ENCODE measurements at regions of chr2 and their contacts with region 1.

Region 1: DNA sequence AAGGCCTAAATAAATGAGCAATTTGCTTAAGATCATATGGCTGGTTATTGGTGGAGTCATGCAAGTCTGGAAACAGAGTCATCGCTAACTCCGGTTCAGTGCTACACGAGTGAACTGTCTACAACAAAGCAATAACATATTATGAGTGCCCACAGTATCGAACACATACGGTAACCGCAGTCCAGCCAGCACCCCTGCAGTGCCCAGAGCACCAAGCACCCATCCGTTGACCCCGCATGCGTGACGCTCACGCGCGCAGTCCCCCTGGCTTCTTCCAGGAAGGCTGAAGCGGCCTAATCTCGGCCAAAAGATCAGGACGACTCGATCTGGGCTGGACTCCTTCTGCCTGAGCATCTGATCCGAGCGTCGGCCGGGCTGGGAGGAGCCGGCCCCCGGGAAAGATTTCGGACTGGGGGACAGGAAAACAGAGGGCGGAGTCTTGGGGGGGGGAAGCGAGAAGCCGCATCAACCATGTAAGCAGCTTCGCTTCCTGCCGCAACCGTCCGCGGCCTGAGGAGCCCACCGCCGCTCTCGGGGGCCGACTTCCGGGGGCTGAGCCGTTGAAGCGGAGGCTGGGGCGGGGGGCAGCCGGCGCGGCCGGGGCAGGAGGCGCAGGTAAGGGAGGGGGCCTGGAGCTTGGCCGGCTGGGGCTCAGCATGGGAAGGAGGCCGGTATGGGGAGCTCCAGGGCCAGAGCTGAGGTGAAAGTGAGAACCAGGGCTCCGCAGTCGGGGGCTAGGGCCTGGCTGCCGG is at the start of gene PIKFYVE:
- DNase-seq: peak; percentile 96
- ATAC-seq: peak; percentile 98
- total RNA-seq, gene PIKFYVE: 14.8 TPM

Region 2: GRCh38 chr2:208254871-208255556 is 11.0 kb before region 1 on chr2 and contains the start of gene IDH1:
- intact Hi-C with region 1: loop called (anchors 1 kb)
- DNase-seq: peak; percentile 98
- ATAC-seq: peak; percentile 97
- total RNA-seq, gene IDH1: 52.4 TPM

Region 3: DNA sequence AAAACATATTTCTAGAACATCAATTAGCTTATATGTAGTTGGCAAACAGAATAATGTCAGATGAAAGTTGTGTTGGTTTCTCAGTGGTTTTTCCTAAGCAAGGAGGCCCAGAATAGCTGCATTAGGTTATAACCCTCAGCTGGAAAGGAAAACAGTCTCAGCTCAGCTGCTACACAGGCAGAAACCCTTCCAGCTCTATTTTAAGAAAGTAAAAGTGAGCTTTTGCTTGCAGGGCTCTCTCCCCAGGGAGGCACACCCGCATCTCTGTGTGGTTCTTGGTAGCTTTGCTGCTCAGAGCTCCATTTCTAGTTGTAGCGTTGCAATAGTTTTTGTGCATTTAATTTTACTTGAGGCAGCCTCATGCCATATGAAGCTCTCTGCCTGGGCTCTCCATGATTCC is 54.7 kb after region 1 on chr2:
- intact Hi-C with region 1: loop called (anchors 5 kb)
- DNase-seq: no peak
- ATAC-seq: peak; percentile 93